Endothelial cell of umbilical vein (primary cell): ENCODE measurements at regions of chr10 and their contacts with region 1.

Region 1: DNA sequence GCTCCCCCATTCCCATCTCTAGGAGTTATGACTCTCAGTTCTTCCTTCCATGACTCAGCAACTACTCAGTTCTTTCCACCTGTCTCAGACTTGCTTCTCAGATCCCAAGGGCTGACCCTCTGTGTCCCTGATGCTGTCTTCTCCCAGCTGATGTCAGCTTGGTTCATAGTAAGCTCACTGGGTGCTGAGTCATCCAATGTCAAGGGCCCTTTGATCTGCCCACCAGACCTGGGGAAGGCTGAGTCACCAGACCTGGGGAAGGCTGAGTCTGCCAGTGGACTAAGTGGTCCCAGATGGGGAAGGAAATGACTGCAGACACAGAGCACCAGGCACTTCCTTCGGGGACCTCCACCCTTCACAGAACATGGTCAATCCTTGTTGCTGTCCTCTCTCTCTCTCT is 76.1 kb upstream of the ZEB1 start:
- DNase-seq: peak; percentile 89
- H3K4me3 ChIP-seq: no peak overlapping the region
- H3K27ac ChIP-seq: peak overlapping the region; percentile 55
- H3K4me1 ChIP-seq: peaks cover 19% of the 10 kb centered on the region
- H3K27me3 ChIP-seq: no peaks in the 10 kb centered on the region
- CTCF ChIP-seq: no peak
- POLR2A ChIP-seq: peak; percentile 36

Region 2: GRCh38 chr10:30959855-30960247 is 283.1 kb before region 1 on chr10:
- CTCF ChIA-PET with region 1: no interaction called
- POLR2A ChIA-PET with region 1: no interaction called
- dilution Hi-C with region 1: no loop called
- intact Hi-C with region 1: no loop called
- DNase-seq: no peak
- H3K4me3 ChIP-seq: no peak overlapping the region
- H3K27ac ChIP-seq: no peak overlapping the region
- H3K4me1 ChIP-seq: peaks cover 14% of the 10 kb centered on the region
- H3K27me3 ChIP-seq: no peaks in the 10 kb centered on the region
- CTCF ChIP-seq: no peak
- POLR2A ChIP-seq: no peak

Region 3: GRCh38 chr10:31129271-31129670 is 113.6 kb before region 1 on chr10:
- CTCF ChIA-PET with region 1: no interaction called
- POLR2A ChIA-PET with region 1: no interaction called
- dilution Hi-C with region 1: no loop called
- intact Hi-C with region 1: no loop called
- DNase-seq: peak; percentile 33
- H3K4me3 ChIP-seq: no peak overlapping the region
- H3K27ac ChIP-seq: no peak overlapping the region
- H3K4me1 ChIP-seq: peaks cover 10% of the 10 kb centered on the region
- H3K27me3 ChIP-seq: no peaks in the 10 kb centered on the region
- CTCF ChIP-seq: no peak
- POLR2A ChIP-seq: no peak

Region 4: GRCh38 chr10:31278279-31278941 is 35.5 kb after region 1 on chr10:
- CTCF ChIA-PET with region 1: no interaction called
- POLR2A ChIA-PET with region 1: no interaction called
- dilution Hi-C with region 1: no loop called
- intact Hi-C with region 1: loop called (anchors 5 kb)
- DNase-seq: peak; percentile 95
- H3K4me3 ChIP-seq: no peak overlapping the region
- H3K27ac ChIP-seq: peak overlapping the region; percentile 78
- H3K4me1 ChIP-seq: peaks cover 13% of the 10 kb centered on the region
- H3K27me3 ChIP-seq: no peaks in the 10 kb centered on the region
- CTCF ChIP-seq: no peak
- POLR2A ChIP-seq: no peak